PC-9 (cell line): ENCODE measurements at regions of chr17 and their contacts with region 1.

Region 1: GRCh38 chr17:4881761-4882555 is 17.4 kb upstream of the C17orf107 start:
- DNase-seq: peak; percentile 60 to 76
- H3K4me3 ChIP-seq: no peak overlapping the region
- H3K27ac ChIP-seq: no peak overlapping the region
- H3K4me1 ChIP-seq: no peaks in the 10 kb centered on the region
- H3K27me3 ChIP-seq: no peaks in the 10 kb centered on the region
- CTCF ChIP-seq: peak; percentile 92

Region 2: DNA sequence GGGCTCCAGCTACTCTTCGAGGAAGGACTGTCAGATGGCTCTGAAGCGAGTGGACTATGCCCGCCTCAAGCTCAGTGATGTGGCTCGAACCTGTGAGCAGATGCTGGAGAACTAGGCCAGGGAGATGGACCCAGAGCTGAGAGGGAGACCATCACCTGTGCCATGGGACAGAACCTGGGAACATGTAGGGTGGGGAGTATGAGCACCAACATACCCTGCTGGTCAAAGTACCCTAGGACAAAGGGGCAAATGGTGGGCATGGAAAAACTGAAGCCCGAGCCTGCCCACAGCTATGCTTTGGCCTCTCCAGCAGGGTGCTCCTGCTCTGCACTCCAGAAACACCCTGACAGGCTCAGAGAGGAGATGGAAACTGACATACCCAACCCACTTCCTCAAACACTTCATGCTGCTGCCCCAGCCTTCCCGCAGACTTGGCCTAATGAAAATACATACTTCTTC is 148.9 kb before region 1 on chr17:
- CTCF ChIA-PET with region 1: no interaction called
- POLR2A ChIA-PET with region 1: no interaction called
- intact Hi-C with region 1: loop called (anchors 1 kb)
- DNase-seq: no peak
- H3K4me3 ChIP-seq: no peak overlapping the region
- H3K27ac ChIP-seq: no peak overlapping the region
- H3K4me1 ChIP-seq: peaks cover 10% of the 10 kb centered on the region; the same call in 1 of the 2 replicates
- H3K27me3 ChIP-seq: no peaks in the 10 kb centered on the region
- CTCF ChIP-seq: no peak

Region 3: GRCh38 chr17:4806777-4807604 is 75.0 kb before region 1 on chr17 and contains the start of gene PLD2:
- CTCF ChIA-PET with region 1: no interaction called
- POLR2A ChIA-PET with region 1: no interaction called
- intact Hi-C with region 1: loop called (anchors 5 kb)
- DNase-seq: peak; percentile 63 to 93
- H3K4me3 ChIP-seq: peak within 1 kb of the TSS; percentile 68
- H3K27ac ChIP-seq: no peak within 1 kb of the TSS
- H3K4me1 ChIP-seq: peaks cover 37% of the 10 kb centered on the region
- H3K27me3 ChIP-seq: no peaks in the 10 kb centered on the region
- CTCF ChIP-seq: no peak
- total RNA-seq, gene PLD2: 95.5 and 116 TPM in 2 replicates